ENCODE measurements at regions of chr7 and their contacts with region 1.

Region 1: DNA sequence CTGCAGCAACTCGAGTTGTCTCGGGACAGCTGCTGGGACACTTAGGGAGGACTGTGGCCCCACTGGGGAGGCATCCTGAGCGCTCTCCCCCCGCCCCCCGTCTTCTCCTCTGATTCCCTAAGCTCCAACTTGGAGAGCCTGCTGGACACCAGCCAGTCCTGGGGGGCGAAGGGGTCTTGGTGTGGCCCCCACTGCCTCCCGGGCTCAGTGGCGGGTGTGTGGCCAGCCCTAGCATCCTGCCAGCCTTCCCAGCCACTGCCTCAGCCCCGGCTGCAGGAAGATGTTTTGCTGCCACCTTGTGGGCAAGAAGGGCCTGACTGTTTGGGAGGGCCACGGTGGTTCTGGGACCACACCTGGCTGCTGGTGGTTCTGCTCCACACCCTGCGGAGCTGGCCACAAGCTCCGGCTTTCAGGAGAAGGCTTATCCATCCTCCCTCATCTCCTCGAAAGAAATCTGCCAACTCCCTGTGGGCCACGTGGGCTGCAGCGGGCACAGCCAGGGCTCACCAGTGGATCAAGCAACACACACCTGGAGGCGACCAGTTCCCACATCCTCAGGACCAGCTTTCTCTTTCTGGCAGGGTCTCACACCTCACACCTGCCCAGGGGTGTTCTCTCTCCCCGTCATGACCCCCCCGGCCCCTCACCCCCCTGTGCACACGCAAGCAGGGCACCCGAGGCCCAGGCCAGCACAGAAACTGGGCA is 24.8 kb downstream of the AGAP3 start:
- DNase-seq: peak; percentile 55
- H3K4me3 Mint-ChIP-seq: no peak overlapping the region
- H3K27ac Mint-ChIP-seq: no peak overlapping the region
- H3K4me1 Mint-ChIP-seq: no peaks in the 10 kb centered on the region
- H3K27me3 Mint-ChIP-seq: peaks cover 5% of the 10 kb centered on the region

Region 2: DNA sequence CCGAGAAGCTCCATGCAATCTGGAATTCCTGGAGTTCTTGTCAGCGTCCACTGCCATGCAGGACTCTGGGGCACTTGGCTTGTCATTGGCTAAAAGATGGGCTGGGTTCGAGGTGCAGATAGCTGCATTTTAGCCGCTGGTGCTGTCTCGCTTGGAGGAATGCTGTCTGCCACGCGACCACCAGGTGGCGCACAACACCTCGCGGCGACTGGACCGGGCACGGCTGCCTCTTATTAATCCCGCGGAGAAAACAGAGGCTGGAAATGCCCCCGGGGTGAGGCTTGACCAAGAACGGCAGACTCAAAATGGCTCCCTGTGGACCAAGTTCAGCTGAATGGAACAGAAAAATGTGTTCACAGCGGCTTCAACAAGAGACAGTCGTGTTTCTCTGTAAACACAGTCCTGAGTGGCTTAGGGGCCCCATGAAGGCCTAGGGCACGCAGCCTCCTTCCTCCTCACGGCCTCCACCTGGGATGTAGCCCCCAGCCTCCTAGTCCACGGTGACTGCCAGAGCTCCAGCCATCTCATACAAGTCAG is 212.6 kb before region 1 on chr7:
- intact Hi-C with region 1: loop called (anchors 5 kb)
- DNase-seq: peak; percentile 61
- H3K4me3 Mint-ChIP-seq: no peak overlapping the region
- H3K27ac Mint-ChIP-seq: no peak overlapping the region
- H3K4me1 Mint-ChIP-seq: peaks cover 4% of the 10 kb centered on the region
- H3K27me3 Mint-ChIP-seq: peaks cover 45% of the 10 kb centered on the region

Region 3: DNA sequence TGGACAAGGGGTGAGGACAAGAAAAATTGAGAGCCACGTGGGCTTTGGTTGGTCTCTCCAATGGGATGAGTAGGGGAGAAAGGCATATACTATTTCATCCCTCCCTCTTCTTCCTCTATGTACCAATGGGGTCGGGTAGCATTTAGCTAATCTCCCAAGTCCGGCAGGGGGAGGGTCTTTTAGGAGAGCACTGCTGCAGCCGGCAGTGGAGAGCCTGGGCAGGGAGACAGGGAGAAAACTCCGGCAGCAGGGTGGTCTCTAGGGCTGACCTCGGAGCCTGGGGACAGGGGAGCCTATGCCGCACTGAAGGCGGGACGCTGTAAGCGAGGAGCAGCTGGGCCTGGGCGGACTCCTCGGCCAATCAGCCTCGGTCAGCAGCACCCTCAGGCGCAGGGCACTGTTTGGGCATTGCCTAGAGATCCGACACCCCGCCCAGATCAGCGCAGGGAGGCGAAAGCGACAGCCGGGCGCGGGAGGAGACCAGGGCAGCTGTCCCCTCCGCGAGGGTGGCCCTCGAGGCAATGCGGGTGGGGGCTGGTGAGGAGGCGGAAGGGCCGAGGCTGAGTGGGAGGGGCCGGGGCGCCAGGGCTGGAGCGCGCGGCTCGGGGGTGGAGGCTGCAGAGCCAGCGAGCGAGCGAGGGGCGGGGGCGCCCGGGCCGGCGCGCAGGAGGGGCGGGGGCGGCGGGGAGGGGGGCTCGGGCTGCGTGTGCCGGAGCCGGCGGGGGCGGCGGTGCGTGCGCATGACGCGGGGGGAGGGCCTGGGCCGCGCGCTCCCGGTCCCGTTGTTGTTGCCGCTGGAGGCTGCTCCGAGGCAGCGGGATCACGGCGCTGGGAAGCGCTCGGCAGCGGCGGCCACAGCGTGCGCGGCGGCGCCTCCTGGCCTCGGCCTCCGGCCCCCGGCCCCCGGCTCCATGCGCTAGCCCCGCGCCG is 25.1 kb before region 1 on chr7 and contains the start of gene AGAP3:
- intact Hi-C with region 1: loop called (anchors 1 kb)
- DNase-seq: peak; percentile 46
- H3K4me3 Mint-ChIP-seq: peak within 1 kb of the TSS; percentile 87
- H3K27ac Mint-ChIP-seq: peak within 1 kb of the TSS; percentile 79
- H3K4me1 Mint-ChIP-seq: peaks cover 24% of the 10 kb centered on the region
- H3K27me3 Mint-ChIP-seq: peaks cover 8% of the 10 kb centered on the region
- total RNA-seq, gene AGAP3: 62.5 and 64.4 TPM in 2 replicates